Prostate gland (tissue), 2 donors: ENCODE measurements at regions of chr15 and their contacts with region 1.

Region 1: DNA sequence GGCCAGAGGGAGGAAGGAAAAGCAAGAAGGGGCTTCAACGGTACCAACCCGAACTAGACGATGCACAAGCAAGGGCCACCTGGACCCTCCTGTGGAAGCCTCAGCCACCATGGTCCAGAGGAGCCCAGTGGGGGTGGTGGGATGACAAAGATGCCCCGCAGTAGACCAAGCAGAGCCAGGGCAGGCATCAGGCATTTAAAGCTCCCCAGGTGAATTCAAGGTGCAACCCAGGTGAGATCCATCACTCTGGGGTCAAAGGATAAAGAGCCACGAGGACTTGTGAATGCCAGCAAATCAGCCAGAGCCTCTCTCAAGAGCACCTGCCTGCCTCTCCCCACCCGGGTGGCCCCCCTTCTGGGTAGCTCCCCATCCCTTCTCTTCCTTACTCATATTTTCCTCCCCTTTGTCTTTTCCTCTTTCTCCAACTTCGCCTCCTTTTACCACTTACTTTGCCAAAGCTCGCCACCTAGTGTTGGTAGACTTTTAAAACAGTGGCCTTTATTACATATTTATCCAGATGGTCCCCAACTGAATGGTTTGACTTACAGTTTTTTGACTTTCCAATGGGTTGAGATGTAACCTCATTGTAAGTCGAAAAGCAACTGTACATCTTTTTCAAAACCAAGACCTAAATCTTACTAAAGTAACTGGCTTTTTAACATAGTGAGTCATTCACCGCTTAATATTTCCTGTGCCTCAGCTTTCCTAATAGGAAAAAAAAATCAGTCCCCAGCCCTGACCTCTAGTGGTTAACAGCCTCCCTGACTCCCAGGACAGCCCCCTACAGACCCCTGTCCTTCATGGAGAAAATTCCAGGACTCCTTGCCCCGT is 18.8 kb downstream of the PLA2G4F start:
- DNase-seq: no peak
- H3K4me3 ChIP-seq: no peak overlapping the region
- H3K27ac ChIP-seq: no peak overlapping the region
- H3K4me1 ChIP-seq: no peaks in the 10 kb centered on the region
- H3K27me3 ChIP-seq: no peaks in the 10 kb centered on the region
- CTCF ChIP-seq: peak; percentile 27 to 69 (median 46)
- POLR2A ChIP-seq: no peak

Region 2: DNA sequence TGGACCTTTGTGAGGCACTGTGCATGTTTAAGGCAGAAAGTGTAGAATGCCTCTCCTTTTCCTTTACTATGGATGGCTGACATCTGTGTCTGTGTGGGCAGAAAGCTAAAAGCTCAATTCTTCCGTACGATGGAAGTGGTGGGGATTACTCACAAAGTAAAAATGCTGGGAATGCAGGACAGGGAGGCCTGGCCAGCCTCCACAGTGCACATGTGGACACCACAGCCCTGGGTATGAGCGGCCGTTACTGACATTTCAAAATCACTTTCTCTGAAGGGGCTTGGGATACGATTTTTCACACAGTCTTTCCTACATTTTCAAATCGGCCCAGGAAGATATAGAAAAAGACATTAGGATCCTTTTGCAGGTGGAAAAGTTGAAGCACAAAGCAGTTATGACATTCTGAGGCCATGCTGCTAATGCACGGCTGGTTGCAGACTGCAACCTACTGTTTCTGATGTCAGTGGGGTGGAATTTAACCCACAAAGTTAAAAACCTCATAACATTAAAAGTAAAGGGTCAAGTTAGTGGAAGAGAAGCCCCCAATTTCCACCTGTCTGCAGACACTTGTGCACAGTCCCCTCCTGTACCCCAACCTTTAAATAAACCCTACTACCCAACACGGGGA is 193.2 kb before region 1 on chr15:
- intact Hi-C with region 1: no loop called
- DNase-seq: no peak
- H3K4me3 ChIP-seq: no peak overlapping the region
- H3K27ac ChIP-seq: no peak overlapping the region
- H3K4me1 ChIP-seq: no peaks in the 10 kb centered on the region
- H3K27me3 ChIP-seq: no peaks in the 10 kb centered on the region
- CTCF ChIP-seq: no peak
- POLR2A ChIP-seq: no peak

Region 3: GRCh38 chr15:41989259-41989933 is 148.2 kb before region 1 on chr15:
- intact Hi-C with region 1: loop called (anchors 5 kb)
- DNase-seq: peak; percentile 76
- H3K4me3 ChIP-seq: no peak overlapping the region
- H3K27ac ChIP-seq: no peak overlapping the region
- H3K4me1 ChIP-seq: no peaks in the 10 kb centered on the region
- H3K27me3 ChIP-seq: no peaks in the 10 kb centered on the region
- CTCF ChIP-seq: peak; percentile 92 to 99 (median 97)
- POLR2A ChIP-seq: no peak

Region 4: DNA sequence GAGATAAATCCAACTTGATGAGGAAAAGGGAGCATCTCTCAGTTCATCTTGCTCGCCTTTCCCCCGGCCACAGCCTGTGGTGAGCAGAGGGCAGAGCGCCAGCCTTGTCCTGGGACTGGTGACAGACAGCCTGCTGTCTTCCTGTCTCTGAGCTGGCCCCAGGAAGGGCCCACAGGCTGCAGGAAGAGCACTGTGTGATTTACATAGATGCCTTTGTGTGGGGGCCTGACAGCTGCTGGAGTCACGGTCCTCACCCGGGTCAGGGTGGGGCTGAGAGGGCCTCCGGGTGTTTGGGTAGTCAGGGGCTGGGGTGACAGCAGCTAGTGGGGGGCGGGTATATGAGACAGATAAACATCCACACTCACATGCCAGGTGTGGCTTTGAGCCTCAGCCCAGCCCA is 72.6 kb before region 1 on chr15:
- intact Hi-C with region 1: loop called (anchors 5 kb)
- DNase-seq: no peak
- H3K4me3 ChIP-seq: no peak overlapping the region
- H3K27ac ChIP-seq: no peak overlapping the region
- H3K4me1 ChIP-seq: no peaks in the 10 kb centered on the region
- H3K27me3 ChIP-seq: no peaks in the 10 kb centered on the region
- CTCF ChIP-seq: no peak
- POLR2A ChIP-seq: no peak

Region 5: DNA sequence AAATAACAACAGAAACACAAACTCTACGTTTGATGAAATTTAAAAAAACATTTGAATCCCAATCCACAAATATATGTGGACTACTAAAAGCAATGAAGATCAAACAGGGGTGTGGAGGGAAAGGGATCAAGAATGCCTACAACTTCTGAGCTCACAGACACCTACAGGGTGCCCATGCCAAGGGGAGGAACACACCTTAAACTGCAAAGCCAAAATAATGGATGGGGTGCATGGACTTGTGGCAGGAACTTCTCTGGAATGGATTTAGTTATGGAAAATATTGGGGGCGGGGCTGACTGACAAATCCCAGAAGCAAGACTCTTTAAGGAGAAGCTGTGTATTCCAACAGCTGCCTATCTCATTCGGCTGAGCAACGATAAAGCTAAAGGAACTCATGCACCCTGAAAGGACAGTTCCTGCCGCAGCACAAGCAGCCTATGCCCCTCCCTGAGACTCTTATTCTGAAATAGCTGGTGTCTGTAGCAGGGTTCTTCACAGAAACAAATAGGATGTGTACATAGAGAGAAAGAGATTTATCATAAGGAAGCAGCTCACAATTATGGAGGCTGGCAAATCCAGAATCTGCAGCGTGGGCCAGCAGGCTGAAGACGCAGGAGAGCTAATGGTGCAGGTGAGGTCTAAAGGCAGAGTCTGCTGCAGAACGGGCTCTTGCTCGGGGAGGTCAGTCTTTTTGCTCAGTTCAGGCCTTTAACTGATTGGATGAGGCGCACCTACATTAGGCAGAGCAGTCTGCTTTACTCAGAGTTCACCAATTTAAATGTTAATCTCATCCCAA is 18.8 kb before region 1 on chr15:
- intact Hi-C with region 1: no loop called
- DNase-seq: no peak
- H3K4me3 ChIP-seq: peak overlapping the region; percentile 3 to 5
- H3K27ac ChIP-seq: peak overlapping the region in 1 of 2 donors; percentile 8
- H3K4me1 ChIP-seq: no peaks in the 10 kb centered on the region
- H3K27me3 ChIP-seq: no peaks in the 10 kb centered on the region
- CTCF ChIP-seq: peak in 1 of 4 experiments; percentile 2
- POLR2A ChIP-seq: no peak

Region 6: DNA sequence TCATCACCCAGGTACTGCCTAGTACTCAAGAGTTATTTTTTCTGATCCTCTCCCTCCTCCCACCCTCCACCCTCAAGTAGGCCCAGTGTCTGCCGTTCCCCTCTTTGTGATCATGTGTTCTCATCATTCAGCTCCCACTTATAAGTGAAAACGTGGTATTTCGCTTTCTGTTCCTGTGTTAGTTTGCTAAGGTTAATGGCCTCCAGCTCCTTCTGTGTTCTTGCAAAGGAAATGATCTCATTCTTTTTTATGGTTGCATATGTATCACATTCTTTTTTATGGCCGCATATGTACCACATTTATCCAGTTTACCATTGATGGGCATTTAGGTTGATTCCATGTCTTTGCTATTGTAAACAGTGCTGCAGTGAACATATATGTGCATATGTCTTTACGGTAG is 127.1 kb after region 1 on chr15:
- intact Hi-C with region 1: no loop called
- DNase-seq: no peak
- H3K4me3 ChIP-seq: no peak overlapping the region
- H3K27ac ChIP-seq: no peak overlapping the region
- H3K4me1 ChIP-seq: no peaks in the 10 kb centered on the region
- H3K27me3 ChIP-seq: no peaks in the 10 kb centered on the region
- CTCF ChIP-seq: no peak
- POLR2A ChIP-seq: no peak